GM10248 (cell line): ENCODE measurements at regions of chr20 and their contacts with region 1.

Region 1: GRCh38 chr20:9978397-9979004 is 56.3 kb upstream of the ANKEF1 start:
- DNase-seq: peak; percentile 50
- CTCF ChIP-seq: peak; percentile 81

Region 2: GRCh38 chr20:9968015-9968414 is 10.5 kb before region 1 on chr20:
- CTCF ChIA-PET with region 1: interaction called, 11 read pairs
- POLR2A ChIA-PET with region 1: no interaction called
- DNase-seq: no peak
- CTCF ChIP-seq: no peak

Region 3: DNA sequence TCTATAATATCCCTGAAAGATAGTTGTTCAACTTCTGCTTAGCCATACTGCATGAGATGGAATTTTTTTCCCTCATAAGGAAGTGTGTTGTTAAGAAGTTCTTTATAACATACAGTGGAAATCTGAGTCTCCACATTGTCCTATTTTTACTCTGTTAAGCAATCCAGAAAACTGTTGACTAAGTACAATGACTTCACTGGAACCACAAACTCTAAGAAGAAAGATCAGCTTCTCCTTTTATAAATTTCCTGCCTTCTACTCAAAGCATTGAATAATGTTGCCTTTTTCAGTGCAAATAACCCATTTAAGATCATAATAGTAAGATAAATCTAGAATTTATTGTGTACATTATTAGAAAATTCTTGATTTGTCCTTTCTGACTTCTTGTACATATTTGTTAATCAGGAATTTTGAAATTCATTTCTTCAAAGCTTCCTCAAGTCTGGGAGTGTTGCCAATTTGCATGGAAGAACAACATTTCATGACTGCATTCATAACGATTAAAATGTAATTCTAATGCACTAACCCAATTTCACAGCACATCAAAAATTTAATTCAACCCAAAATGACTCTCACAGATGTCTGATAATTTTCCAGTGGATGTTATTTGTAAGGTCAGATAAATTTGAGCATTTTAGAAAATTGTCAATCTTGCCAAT is 10.7 kb after region 1 on chr20:
- CTCF ChIA-PET with region 1: interaction called, 12 read pairs
- POLR2A ChIA-PET with region 1: no interaction called
- DNase-seq: no peak
- CTCF ChIP-seq: no peak

Region 4: DNA sequence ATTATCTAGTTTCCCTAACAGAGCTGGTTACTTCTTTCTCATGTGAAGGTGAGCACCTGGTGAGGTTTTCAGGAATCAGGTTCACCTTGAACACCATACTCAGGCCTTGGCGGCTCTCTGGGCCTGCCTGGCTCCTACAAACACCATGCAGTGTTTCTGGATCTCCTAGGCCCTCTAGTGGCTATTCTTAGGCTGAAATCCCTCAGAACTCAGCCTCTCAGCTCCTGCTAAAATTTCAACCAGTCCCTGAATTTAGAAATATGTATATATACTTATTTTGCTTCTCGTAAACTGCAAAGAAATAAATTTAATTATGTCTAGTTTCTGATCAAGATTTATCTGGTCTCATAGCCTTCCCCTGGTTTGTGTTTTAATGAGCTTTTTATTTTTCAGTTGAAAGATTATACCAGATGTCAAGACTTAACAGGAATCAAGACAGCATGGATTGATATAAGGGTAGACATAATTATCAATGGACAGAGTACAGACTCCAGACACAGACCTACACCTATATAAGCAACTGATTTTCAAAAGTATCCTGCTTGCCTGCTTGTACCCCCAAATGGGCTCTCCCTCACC is 112.2 kb after region 1 on chr20:
- CTCF ChIA-PET with region 1: interaction called, 33 read pairs
- POLR2A ChIA-PET with region 1: no interaction called
- DNase-seq: peak; percentile 26
- CTCF ChIP-seq: peak; percentile 57

Region 5: GRCh38 chr20:10171864-10172751 is 193.6 kb after region 1 on chr20:
- CTCF ChIA-PET with region 1: no interaction called
- POLR2A ChIA-PET with region 1: no interaction called
- DNase-seq: no peak
- CTCF ChIP-seq: no peak

Region 6: DNA sequence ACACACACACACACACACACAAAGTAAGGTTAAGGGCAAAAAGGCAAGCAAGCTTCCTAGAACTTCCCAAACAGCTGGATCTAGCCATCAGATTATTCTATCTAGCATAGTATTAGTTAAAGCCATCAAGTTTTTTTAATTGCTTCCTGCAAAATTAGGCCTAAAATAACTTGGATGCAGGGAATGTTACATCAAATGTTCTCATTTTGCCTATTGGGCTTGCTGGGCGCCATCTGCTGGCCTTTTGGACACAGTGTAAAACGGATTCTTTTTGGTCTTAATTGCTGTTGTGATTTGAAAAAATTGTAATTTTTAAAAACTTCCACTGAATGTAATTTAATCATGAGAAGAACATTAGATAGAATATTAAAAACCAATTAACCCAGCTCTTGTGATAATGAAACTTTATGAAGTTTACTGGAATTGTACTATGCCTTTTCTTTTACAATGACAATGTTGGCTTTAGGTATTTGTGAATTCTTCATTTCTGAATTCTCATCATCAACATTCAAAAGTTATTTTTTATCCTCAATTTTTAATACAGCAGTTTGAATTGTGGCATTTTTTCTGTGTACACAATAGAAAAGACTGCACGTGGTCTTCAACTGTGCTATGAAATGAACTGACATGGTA is 448.7 kb after region 1 on chr20:
- CTCF ChIA-PET with region 1: interaction called, 12 read pairs
- POLR2A ChIA-PET with region 1: no interaction called
- DNase-seq: peak; percentile 31
- CTCF ChIP-seq: peak; percentile 76